Right lobe of liver (tissue), 6 donors: ENCODE measurements at regions of chr11 and their contacts with region 1.

Region 1: GRCh38 chr11:34174412-34175041 is 69.1 kb downstream of the NAT10 start:
- DNase-seq: peak; percentile 85 to 87 (median 86)
- ATAC-seq: peak; percentile 99
- H3K4me3 ChIP-seq: peak overlapping the region in 2 of 3 donors; percentile 9 to 12
- H3K27ac ChIP-seq: peak overlapping the region in 1 of 3 donors; percentile 1
- H3K4me1 ChIP-seq: peaks cover 0 to 6% (median 0%) of the 10 kb centered on the region in 4 donors
- H3K27me3 ChIP-seq: no peaks in the 10 kb centered on the region
- CTCF ChIP-seq: peak; percentile 88 to 98 (median 90)
- POLR2A ChIP-seq: no peak

Region 2: DNA sequence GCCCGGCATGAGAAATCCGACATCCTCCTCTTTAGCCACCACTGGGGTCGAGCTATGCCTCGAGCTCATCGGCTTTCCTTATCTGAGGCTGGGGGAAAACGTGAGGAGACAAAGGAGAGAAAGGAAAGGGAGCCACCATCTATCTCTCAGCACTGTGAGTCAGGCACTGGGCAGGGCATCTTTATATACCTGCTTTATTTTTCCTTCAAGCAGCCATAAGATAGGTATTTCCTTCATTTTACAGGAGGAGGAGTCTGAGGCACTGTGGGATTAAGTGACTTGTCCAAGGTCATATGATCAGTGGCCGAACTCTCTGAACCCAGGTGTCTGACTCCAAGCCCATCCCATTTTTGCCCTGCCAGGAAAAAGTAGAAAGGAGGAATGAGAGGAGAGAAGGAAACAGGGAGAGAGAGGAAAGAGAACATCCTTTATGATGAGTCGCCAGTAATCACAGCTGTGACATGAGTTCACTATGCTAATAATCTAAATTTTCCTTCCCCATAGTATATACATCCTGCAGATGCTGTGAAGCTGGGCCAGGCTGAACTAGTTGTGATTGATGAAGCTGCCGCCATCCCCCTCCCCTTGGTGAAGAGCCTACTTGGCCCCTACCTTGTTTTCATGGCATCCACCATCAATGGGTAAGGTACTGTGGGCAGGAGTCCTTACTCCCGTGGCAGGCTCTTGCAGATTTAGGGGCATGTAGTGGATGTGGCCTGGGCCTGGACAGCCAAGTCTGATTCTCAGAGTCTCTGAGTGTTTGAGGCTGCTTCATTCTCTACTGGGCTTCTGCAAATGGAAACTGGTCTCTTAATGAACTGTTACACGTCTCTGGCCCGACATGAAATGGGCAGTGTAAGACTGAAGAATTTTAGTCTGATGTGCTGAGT is 47.3 kb before region 1 on chr11:
- intact Hi-C with region 1: no loop called
- DNase-seq: no peak
- ATAC-seq: no peak
- H3K4me3 ChIP-seq: no peak overlapping the region
- H3K27ac ChIP-seq: no peak overlapping the region
- H3K4me1 ChIP-seq: no peaks in the 10 kb centered on the region
- H3K27me3 ChIP-seq: no peaks in the 10 kb centered on the region
- CTCF ChIP-seq: no peak
- POLR2A ChIP-seq: no peak

Region 3: GRCh38 chr11:34302046-34302921 is 127.8 kb after region 1 on chr11:
- intact Hi-C with region 1: no loop called
- DNase-seq: no peak
- ATAC-seq: no peak
- H3K4me3 ChIP-seq: no peak overlapping the region
- H3K27ac ChIP-seq: no peak overlapping the region
- H3K4me1 ChIP-seq: no peaks in the 10 kb centered on the region
- H3K27me3 ChIP-seq: no peaks in the 10 kb centered on the region
- CTCF ChIP-seq: no peak
- POLR2A ChIP-seq: no peak

Region 4: DNA sequence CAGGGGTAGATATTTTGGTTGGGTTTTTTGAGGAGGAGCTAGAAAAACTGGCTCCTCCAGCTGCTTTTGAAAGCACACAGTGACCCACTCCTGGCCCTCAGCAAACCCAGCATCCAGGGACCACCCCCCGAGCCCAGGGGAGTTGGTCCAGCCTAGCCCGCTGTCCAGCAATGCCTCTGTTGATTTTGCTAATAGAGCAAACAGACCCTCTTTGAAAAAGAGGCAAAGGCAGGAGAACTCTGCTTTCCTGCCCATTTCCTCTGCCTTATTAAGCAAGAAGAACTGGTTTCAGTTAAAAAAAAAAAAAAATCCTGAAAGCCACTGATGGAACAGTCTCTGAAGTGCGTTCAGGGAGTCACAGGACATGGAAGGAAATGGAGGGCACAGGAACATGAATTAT is 158.0 kb after region 1 on chr11:
- intact Hi-C with region 1: no loop called
- DNase-seq: no peak
- ATAC-seq: no peak
- H3K4me3 ChIP-seq: no peak overlapping the region
- H3K27ac ChIP-seq: no peak overlapping the region
- H3K4me1 ChIP-seq: peaks cover 0 to 36% (median 0%) of the 10 kb centered on the region in 4 donors
- H3K27me3 ChIP-seq: no peaks in the 10 kb centered on the region
- CTCF ChIP-seq: no peak
- POLR2A ChIP-seq: no peak

Region 5: GRCh38 chr11:34344768-34345539 is 170.4 kb after region 1 on chr11:
- intact Hi-C with region 1: loop called in 1 of 2 experiments (anchors 5 kb)
- DNase-seq: peak; percentile 83 to 93 (median 83)
- ATAC-seq: peak; percentile 69 to 88 (median 82)
- H3K4me3 ChIP-seq: no peak overlapping the region
- H3K27ac ChIP-seq: peak overlapping the region; percentile 57 to 71 (median 71)
- H3K4me1 ChIP-seq: peaks cover 0 to 92% (median 32%) of the 10 kb centered on the region in 4 donors
- H3K27me3 ChIP-seq: no peaks in the 10 kb centered on the region
- CTCF ChIP-seq: no peak
- POLR2A ChIP-seq: no peak

Region 6: GRCh38 chr11:34357701-34358257 is 183.3 kb after region 1 on chr11 and contains the start of gene ABTB2:
- intact Hi-C with region 1: loop called in 1 of 2 experiments (anchors 5 kb)
- DNase-seq: peak; percentile 98 to 99 (median 99)
- ATAC-seq: peak; percentile 78 to 90 (median 84)
- H3K4me3 ChIP-seq: peak within 1 kb of the TSS; percentile 68 to 86 (median 71)
- H3K27ac ChIP-seq: peak within 1 kb of the TSS; percentile 64 to 92 (median 77)
- H3K4me1 ChIP-seq: peaks cover 0 to 19% (median 0%) of the 10 kb centered on the region in 4 donors
- H3K27me3 ChIP-seq: no peaks in the 10 kb centered on the region
- CTCF ChIP-seq: no peak
- POLR2A ChIP-seq: peak; percentile 99
- total RNA-seq, gene ABTB2: 6.0 to 14.9 (median 10.0) TPM